PC-3 (cell line): ENCODE measurements at regions of chrX and their contacts with region 1.

Region 1: DNA sequence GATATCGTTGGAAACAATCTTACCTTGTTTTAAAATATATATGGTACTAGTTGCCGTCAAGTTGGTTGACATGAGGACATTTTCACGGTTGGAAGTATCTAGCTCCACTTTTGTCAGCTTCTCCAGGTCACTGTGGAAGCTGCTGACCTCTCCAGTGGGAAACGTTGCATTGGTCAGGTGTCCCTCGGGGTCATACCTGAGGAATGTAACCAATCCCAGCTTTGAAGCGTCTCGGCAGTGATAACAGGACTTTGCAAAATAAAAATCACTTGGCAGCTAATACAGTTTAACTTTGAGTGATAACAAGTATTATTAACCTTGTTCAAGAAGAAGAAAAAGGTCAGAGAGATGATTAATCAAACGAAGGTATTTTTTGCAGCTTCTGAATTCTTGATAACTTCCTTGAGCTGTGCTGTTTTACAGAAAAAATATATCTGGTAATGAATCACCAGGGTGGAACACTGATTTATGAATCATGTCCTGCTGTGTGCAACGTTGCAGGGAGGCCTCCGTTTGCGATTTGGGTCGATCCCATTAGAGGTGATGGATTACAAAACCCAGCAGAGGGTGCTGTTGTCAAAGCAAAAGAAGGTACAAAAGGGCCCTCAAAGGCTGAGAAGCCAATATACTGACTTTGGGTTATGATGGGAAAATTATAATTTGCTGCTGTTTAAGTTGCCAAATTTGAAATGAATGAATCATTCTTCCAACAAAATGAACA is 60.1 kb downstream of the SH2D1A start:
- DNase-seq: peak; percentile 93
- ATAC-seq: peak; percentile 94
- H3K4me3 ChIP-seq: peak overlapping the region; percentile 20; the same call in 1 of the 2 replicates
- H3K27ac ChIP-seq: peak overlapping the region; percentile 34
- H3K4me1 ChIP-seq: peaks cover 11% of the 10 kb centered on the region
- H3K27me3 ChIP-seq: no peaks in the 10 kb centered on the region
- CTCF ChIP-seq: peak; percentile 78

Region 2: GRCh38 chrX:124388562-124388961 is 17.9 kb before region 1 on chrX:
- CTCF ChIA-PET with region 1: interaction called, 5 read pairs
- POLR2A ChIA-PET with region 1: no interaction called
- intact Hi-C with region 1: loop called (anchors 2 kb)
- DNase-seq: peak; percentile 64
- ATAC-seq: peak; percentile 77
- H3K4me3 ChIP-seq: no peak overlapping the region
- H3K27ac ChIP-seq: no peak overlapping the region
- H3K4me1 ChIP-seq: peaks cover under 1% of the 10 kb centered on the region
- H3K27me3 ChIP-seq: no peaks in the 10 kb centered on the region
- CTCF ChIP-seq: peak; percentile 58

Region 3: GRCh38 chrX:124435616-124436015 is 29.2 kb after region 1 on chrX:
- CTCF ChIA-PET with region 1: no interaction called
- POLR2A ChIA-PET with region 1: no interaction called
- intact Hi-C with region 1: no loop called
- DNase-seq: no peak
- ATAC-seq: no peak
- H3K4me3 ChIP-seq: no peak overlapping the region
- H3K27ac ChIP-seq: no peak overlapping the region
- H3K4me1 ChIP-seq: no peaks in the 10 kb centered on the region
- H3K27me3 ChIP-seq: no peaks in the 10 kb centered on the region
- CTCF ChIP-seq: no peak

Region 4: DNA sequence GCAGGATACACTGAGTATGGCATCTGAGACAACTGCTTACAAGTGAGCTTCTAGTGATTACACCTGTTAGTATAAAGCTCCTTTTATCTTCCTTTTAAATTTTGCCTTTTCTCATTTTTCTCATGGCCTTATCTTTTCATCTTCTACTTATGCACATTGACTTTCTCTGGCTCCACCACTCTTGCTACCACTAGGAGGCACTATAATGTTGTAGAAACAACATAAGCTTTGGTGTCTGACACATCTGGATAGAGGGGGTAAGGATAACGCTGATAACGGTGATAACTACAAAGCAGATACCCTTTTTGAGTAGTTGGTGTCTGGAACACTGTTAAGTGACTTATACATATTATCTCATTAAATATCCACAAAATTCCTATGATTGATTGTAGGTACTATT is 725.8 kb after region 1 on chrX:
- CTCF ChIA-PET with region 1: no interaction called
- POLR2A ChIA-PET with region 1: no interaction called
- intact Hi-C with region 1: loop called (anchors 1 kb)
- DNase-seq: peak; percentile 53
- ATAC-seq: no peak
- H3K4me3 ChIP-seq: no peak overlapping the region
- H3K27ac ChIP-seq: no peak overlapping the region
- H3K4me1 ChIP-seq: no peaks in the 10 kb centered on the region
- H3K27me3 ChIP-seq: no peaks in the 10 kb centered on the region
- CTCF ChIP-seq: peak; percentile 78